B cell (primary cell): ENCODE measurements at regions of chr21 and their contacts with region 1.

Region 1: GRCh38 chr21:37475186-37475868 is 108.8 kb downstream of the DYRK1A start:
- DNase-seq: peak; percentile 19
- ATAC-seq: peak; percentile 33
- H3K4me3 ChIP-seq: no peak overlapping the region
- H3K4me3 Mint-ChIP-seq: no peak overlapping the region
- H3K27ac ChIP-seq: peak overlapping the region in 1 of 2 donors; percentile 52
- H3K27ac Mint-ChIP-seq: peak overlapping the region; percentile 0
- H3K4me1 ChIP-seq: peaks cover 3 to 14% of the 10 kb centered on the region in 2 donors
- H3K4me1 Mint-ChIP-seq: peaks cover 49% of the 10 kb centered on the region
- H3K27me3 ChIP-seq: no peaks in the 10 kb centered on the region
- H3K27me3 Mint-ChIP-seq: no peaks in the 10 kb centered on the region
- CTCF ChIP-seq: no peak

Region 2: DNA sequence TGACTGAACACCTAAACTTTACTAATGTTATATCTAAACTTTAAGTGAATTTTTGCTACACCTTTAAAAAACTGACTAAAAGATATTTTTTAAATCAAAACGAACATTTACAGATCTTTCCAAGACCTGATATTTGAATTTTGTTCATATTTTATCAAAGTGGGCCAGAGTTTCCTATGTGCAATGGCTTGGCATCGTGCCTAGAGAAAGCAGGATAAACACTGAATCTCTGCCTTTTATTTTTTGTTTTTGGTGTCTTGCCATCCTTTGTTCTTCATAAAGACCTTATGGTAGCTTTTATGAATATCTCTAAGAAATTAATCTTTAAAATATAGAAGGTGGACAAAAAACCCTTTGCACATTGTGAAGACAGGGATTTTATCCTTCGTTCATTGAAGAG is 182.4 kb before region 1 on chr21:
- CTCF ChIA-PET with region 1: no interaction called
- POLR2A ChIA-PET with region 1: no interaction called
- intact Hi-C with region 1: no loop called
- DNase-seq: no peak
- ATAC-seq: no peak
- H3K4me3 ChIP-seq: no peak overlapping the region
- H3K4me3 Mint-ChIP-seq: no peak overlapping the region
- H3K27ac ChIP-seq: no peak overlapping the region
- H3K27ac Mint-ChIP-seq: no peak overlapping the region
- H3K4me1 ChIP-seq: no peaks in the 10 kb centered on the region
- H3K4me1 Mint-ChIP-seq: no peaks in the 10 kb centered on the region
- H3K27me3 ChIP-seq: no peaks in the 10 kb centered on the region
- H3K27me3 Mint-ChIP-seq: peaks cover 14% of the 10 kb centered on the region
- CTCF ChIP-seq: no peak

Region 3: GRCh38 chr21:37452227-37452626 is 23.1 kb before region 1 on chr21:
- CTCF ChIA-PET with region 1: no interaction called
- POLR2A ChIA-PET with region 1: interaction called, 12 read pairs
- intact Hi-C with region 1: no loop called
- DNase-seq: peak; percentile 30
- ATAC-seq: peak; percentile 17
- H3K4me3 ChIP-seq: no peak overlapping the region
- H3K4me3 Mint-ChIP-seq: no peak overlapping the region
- H3K27ac ChIP-seq: peak overlapping the region in 1 of 2 donors; percentile 56
- H3K27ac Mint-ChIP-seq: no peak overlapping the region
- H3K4me1 ChIP-seq: peaks cover 15 to 32% of the 10 kb centered on the region in 2 donors
- H3K4me1 Mint-ChIP-seq: peaks cover 62% of the 10 kb centered on the region
- H3K27me3 ChIP-seq: no peaks in the 10 kb centered on the region
- H3K27me3 Mint-ChIP-seq: no peaks in the 10 kb centered on the region
- CTCF ChIP-seq: no peak

Region 4: DNA sequence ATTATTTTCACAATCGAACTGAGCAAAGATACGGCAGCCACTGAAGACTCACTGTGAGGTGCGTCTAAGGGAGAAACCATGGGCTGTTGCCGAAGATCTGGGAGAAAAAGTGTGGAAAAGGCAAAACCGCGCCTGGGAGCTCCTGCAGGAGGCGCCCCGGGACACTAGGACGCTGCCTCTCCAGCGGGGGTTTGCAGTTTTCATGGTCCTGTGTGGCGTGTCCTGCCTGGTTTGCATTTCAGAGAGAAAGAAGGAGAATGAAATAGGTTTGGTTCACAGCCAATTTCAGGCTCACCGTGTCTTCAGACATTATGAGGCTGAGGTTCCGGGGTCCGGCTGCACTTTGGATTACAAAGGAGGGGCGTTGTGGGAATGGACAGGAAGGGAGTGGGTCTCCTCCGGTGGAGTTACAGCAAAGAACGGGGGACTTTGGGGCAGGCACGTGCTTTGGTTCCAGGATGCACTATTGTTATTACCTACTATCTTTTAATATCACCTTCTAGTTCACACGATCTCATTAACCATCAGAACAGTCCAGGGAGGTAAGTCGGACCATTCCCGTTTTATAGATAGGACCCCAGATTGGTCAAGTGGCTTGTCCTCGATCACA is 71.1 kb after region 1 on chr21:
- CTCF ChIA-PET with region 1: no interaction called
- POLR2A ChIA-PET with region 1: no interaction called
- intact Hi-C with region 1: no loop called
- DNase-seq: no peak
- ATAC-seq: no peak
- H3K4me3 ChIP-seq: no peak overlapping the region
- H3K4me3 Mint-ChIP-seq: no peak overlapping the region
- H3K27ac ChIP-seq: no peak overlapping the region
- H3K27ac Mint-ChIP-seq: no peak overlapping the region
- H3K4me1 ChIP-seq: peaks cover 11 to 14% of the 10 kb centered on the region in 2 donors
- H3K4me1 Mint-ChIP-seq: peaks cover 11% of the 10 kb centered on the region
- H3K27me3 ChIP-seq: peaks cover 0 to 20% (median 14%) of the 10 kb centered on the region in 4 experiments
- H3K27me3 Mint-ChIP-seq: peaks cover 48% of the 10 kb centered on the region
- CTCF ChIP-seq: no peak